ENCODE measurements at regions of chr7 and their contacts with region 1.

Region 1: DNA sequence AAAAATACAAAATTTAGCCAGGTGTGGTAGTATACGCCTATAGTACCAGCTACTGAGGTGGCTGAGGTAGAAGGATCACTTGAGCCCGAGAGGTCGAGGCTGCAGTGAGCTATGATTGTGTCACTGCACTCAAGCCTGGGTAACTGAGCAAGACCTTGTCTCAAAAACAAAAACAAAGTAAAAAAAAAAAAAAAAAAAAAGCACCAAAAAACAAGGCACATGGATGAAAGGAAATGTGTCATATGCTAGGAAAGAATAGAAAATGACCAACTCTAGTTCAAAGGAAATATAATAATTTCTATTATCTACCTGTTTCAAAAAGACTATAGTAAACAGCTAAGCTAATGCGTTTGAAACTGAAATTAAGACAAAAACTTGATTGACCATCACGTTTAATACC is 33.8 kb downstream of the UBE2H start:
- DNase-seq: no peak
- ATAC-seq: no peak
- H3K4me3 Mint-ChIP-seq: no peak overlapping the region
- H3K27ac Mint-ChIP-seq: peak overlapping the region; percentile 5; the same call in 1 of the 2 replicates
- H3K4me1 Mint-ChIP-seq: peaks cover 36% of the 10 kb centered on the region
- H3K27me3 Mint-ChIP-seq: no peaks in the 10 kb centered on the region
- CTCF ChIP-seq: no peak

Region 2: GRCh38 chr7:129952653-129953560 is 34.0 kb after region 1 on chr7 and contains the start of gene UBE2H:
- CTCF ChIA-PET with region 1: no interaction called
- POLR2A ChIA-PET with region 1: interaction called, 10 read pairs
- DNase-seq: peak; percentile 91
- ATAC-seq: peak; percentile 61
- H3K4me3 Mint-ChIP-seq: peak within 1 kb of the TSS; percentile 95
- H3K27ac Mint-ChIP-seq: peak within 1 kb of the TSS; percentile 99
- H3K4me1 Mint-ChIP-seq: peaks cover 15% of the 10 kb centered on the region
- H3K27me3 Mint-ChIP-seq: no peaks in the 10 kb centered on the region; the same call in 1 of the 2 replicates
- CTCF ChIP-seq: no peak
- total RNA-seq, gene UBE2H: 55.0 to 65.8 TPM (median 63.4 TPM) in 3 replicates

Region 3: GRCh38 chr7:130010689-130011412 is 91.9 kb after region 1 on chr7:
- CTCF ChIA-PET with region 1: no interaction called
- POLR2A ChIA-PET with region 1: no interaction called
- DNase-seq: peak; percentile 93
- ATAC-seq: peak; percentile 78
- H3K4me3 Mint-ChIP-seq: no peak overlapping the region
- H3K27ac Mint-ChIP-seq: 0 out of 2 replicates have a peak overlapping the region, but pooled peaks have one; percentile 44
- H3K4me1 Mint-ChIP-seq: peaks cover 3% of the 10 kb centered on the region
- H3K27me3 Mint-ChIP-seq: no peaks in the 10 kb centered on the region
- CTCF ChIP-seq: peak; percentile 95